ENCODE measurements at regions of chr15 and their contacts with region 1.

Region 1: DNA sequence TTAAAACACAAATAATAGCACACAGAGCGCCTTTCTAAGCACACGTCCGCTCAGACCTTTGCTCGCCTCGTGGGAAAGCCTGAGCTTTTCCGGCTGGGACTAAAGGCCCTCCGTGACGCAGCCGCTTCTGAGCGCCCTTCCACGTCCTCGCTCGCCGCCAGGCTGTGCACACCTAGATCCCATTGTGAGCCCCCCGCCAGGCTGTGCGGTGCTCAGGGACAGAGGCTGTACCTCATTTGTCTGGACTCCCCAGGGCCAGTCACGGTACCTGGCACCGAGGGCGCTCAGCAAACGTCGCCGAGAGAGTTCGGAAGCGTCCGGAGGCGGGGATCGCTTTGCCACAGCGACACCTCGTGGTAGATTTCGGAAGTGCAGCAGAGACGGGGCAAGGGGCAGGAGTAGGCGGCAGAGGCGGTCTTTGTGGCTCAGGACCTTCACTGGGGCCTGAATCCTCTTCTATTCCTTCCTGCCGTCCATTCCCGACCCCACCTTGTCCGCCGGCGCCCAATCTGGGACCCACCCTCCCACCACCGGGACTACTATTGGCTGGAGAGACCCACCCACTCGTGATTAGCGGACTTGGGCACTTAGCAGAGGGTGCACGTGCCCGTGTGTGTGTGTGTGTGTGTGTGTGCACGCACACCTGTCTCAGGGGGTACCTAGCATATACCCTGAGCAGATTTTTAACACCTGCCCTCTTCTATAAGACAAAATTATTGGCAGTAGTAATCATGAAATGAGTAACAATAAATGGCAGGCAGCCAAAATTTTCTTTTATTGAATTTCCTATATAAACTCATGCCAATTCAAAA is 65.6 kb downstream of the RHCG start:
- DNase-seq: peak; percentile 61 to 84 (median 76)
- H3K4me3 ChIP-seq: peak overlapping the region; percentile 11 to 77 (median 59)
- H3K27ac ChIP-seq: no peak overlapping the region
- H3K4me1 ChIP-seq: peaks cover 0 to 7% (median 5%) of the 10 kb centered on the region in 4 experiments
- H3K27me3 ChIP-seq: peaks cover 3 to 46% (median 21%) of the 10 kb centered on the region in 5 experiments

Region 2: DNA sequence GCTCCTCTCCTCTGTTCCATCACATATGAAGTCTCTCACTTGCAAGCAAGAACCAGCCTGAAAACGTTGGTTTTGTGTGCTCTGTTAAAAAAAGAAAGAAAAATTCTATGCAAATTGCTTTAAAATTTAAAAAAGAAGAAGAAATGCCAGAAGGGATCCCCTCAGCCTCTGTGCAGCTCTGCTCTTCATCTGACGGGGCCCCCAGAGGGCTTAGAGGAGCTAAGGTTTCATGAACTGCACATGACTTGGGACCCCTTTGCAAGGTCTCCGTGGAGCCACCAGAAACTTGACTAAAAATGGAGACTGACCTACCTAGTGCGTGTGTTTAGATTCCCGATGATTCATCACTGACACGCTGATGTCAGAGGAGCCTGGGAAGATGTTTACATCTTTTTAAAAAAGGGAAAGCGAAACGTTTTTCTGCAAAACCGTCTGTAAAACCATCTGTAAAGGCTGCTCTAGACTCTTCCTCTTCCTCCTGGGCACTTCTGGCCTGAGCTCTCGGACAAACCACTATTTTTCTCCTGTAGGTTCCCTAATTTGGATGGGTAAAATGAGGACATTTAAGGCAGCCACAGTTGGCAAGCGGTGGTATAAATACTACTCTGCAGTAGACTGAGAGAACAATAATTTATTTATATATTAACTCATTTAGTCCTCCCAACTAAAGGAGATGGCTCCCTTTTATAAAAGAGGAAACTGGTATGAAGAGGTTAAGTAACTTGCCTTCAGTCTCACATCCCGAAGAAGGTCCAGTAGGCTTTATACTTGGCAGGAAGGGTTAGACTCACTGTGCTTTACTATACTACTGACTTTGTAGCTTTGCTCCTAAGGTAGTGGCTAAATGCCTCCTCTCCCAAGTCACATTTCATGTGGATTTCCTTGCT is 28.9 kb before region 1 on chr15:
- CTCF ChIA-PET with region 1: no interaction called
- POLR2A ChIA-PET with region 1: no interaction called
- DNase-seq: peak in 1 of 3 donors; percentile 37
- H3K4me3 ChIP-seq: peak overlapping the region in 1 of 7 experiments; percentile 20
- H3K27ac ChIP-seq: no peak overlapping the region
- H3K4me1 ChIP-seq: peaks cover 0 to 33% (median 24%) of the 10 kb centered on the region in 4 experiments
- H3K27me3 ChIP-seq: peaks cover 27 to 100% (median 64%) of the 10 kb centered on the region in 5 experiments

Region 3: GRCh38 chr15:89416141-89416853 is 14.4 kb before region 1 on chr15:
- CTCF ChIA-PET with region 1: interaction called, 60 read pairs
- POLR2A ChIA-PET with region 1: no interaction called
- DNase-seq: peak; percentile 88 to 93 (median 91)
- H3K4me3 ChIP-seq: no peak overlapping the region
- H3K27ac ChIP-seq: no peak overlapping the region
- H3K4me1 ChIP-seq: peaks cover 0 to 14% (median 5%) of the 10 kb centered on the region in 4 experiments
- H3K27me3 ChIP-seq: peaks cover 23 to 100% (median 56%) of the 10 kb centered on the region in 5 experiments

Region 4: DNA sequence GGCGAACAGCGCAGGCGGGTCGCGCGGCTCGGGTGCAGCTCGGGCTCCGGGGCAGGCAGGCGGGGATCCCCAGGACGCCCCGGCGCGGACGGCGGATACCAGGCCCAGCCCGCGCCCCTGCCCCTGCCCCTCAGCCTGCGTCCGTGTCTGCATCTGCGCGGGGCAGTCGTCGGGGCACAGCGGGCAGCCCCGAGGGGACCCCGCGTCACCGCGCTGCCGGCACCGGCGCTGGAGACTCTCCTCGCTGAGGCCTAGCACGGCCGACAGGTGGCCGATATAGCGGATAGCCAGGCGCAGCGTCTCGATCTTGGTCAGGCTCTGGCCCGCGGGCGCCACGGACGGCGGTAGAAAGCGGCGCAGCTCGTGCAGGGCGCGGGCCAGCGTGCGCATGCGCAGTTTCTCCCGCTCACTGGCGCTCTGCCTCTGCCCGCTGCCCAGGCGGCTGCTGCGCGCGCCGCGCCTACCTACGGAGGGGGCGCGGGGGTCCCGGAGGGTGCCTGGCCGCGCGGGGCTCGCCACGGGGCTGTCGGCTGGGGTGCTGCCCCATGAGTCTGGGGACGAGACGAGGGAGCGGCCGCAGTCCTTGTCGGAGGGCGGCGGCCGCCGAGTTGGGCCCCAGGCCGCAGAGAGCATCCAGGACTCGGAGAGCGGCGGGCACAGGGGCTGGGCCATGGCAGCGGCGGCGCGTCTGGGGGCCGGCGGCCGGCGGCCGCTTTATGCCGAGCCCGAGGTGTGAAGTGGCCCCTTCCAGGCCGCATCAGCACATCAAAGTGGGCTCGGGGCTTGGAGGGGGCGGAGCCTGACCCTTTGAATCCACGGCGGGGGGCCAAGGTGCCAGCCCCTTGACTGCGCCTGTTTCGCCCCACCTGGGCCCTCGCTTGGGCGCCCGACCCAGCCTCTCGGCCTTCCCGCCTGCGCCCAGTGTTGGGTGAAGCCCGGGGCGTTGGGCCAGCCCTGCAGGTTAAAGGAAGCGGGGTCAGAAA is 320.1 kb after region 1 on chr15 and contains the start of gene MESP1:
- CTCF ChIA-PET with region 1: no interaction called
- POLR2A ChIA-PET with region 1: no interaction called
- DNase-seq: peak; percentile 91 to 95 (median 95)
- H3K4me3 ChIP-seq: peak within 1 kb of the TSS; percentile 41 to 80 (median 67)
- H3K27ac ChIP-seq: no peak within 1 kb of the TSS
- H3K4me1 ChIP-seq: peaks cover 0 to 19% (median 14%) of the 10 kb centered on the region in 4 experiments
- H3K27me3 ChIP-seq: peaks cover 0 to 2% (median 0%) of the 10 kb centered on the region in 5 experiments